ENCODE measurements at regions of chr4 and their contacts with region 1.

Region 1: DNA sequence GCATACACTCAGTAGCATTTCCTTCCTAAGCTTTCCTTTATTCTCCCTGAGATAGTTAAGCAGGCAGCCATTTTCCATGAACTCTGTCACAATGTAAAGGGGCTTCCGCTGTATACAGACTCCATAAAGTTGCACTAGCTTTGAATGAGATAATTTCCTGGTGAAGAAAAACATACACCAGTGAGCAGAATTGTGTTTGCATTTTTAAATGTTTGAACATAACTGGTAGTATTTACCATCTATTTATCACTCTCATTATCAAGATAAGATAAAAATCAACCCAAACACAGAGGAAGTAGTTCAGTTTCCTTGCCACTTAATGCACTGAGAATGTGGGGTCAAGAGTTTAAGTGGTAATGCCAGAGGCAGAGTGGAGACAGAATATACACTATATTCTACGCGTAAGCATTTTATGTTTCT is 54.1 kb downstream of the TXK start:
- DNase-seq: no peak
- H3K4me3 ChIP-seq: no peak overlapping the region
- H3K27ac ChIP-seq: no peak overlapping the region
- H3K4me1 ChIP-seq: no peaks in the 10 kb centered on the region
- H3K27me3 ChIP-seq: no peaks in the 10 kb centered on the region
- CTCF ChIP-seq: no peak

Region 2: GRCh38 chr4:46900082-46900481 is 1179.9 kb before region 1 on chr4:
- intact Hi-C with region 1: no loop called
- DNase-seq: no peak
- H3K4me3 ChIP-seq: no peak overlapping the region
- H3K27ac ChIP-seq: no peak overlapping the region
- H3K4me1 ChIP-seq: no peaks in the 10 kb centered on the region
- H3K27me3 ChIP-seq: no peaks in the 10 kb centered on the region
- CTCF ChIP-seq: no peak

Region 3: DNA sequence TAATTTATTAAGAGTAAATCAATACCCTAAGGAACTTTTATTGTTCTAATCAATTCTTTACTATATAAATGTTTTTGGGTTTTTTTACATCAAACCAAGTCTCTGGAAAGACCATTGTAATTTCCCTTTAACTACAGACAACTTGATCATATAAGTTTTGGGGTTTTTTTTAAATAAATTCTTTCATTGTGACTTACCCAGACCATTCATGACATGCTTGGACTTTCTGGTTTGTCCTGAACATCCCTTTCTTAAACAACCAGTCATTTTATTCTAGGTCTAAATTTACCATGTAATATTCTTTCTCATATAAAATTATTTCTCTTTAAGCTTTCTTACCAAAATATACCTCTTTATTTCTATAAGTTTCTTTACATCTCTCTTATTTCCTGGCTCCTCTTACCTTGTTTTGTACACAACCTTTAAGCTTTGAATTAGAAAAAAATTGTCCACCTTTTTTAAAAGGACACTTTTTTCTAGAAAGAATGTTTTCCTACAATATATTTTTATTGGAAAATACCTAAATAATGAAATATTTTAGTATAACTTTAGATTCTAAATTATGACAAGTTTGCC is 71.9 kb before region 1 on chr4:
- intact Hi-C with region 1: loop called (anchors 10 kb)
- DNase-seq: no peak
- H3K4me3 ChIP-seq: no peak overlapping the region
- H3K27ac ChIP-seq: no peak overlapping the region
- H3K4me1 ChIP-seq: no peaks in the 10 kb centered on the region
- H3K27me3 ChIP-seq: no peaks in the 10 kb centered on the region
- CTCF ChIP-seq: no peak

Measured in left ventricle myocardium inferior (tissue), 1 donor.